AG04449 (cell line): ENCODE measurements at regions of chr20 and their contacts with region 1.

Region 1: GRCh38 chr20:63775096-63775978 is 35.8 kb downstream of the SLC2A4RG start:
- DNase-seq: no peak
- H3K4me3 ChIP-seq: peak overlapping the region; percentile 37
- CTCF ChIP-seq: peak; percentile 91

Region 2: GRCh38 chr20:62776692-62777527 is 998.4 kb before region 1 on chr20:
- CTCF ChIA-PET with region 1: no interaction called
- POLR2A ChIA-PET with region 1: no interaction called
- DNase-seq: no peak
- H3K4me3 ChIP-seq: no peak overlapping the region
- CTCF ChIP-seq: no peak

Region 3: DNA sequence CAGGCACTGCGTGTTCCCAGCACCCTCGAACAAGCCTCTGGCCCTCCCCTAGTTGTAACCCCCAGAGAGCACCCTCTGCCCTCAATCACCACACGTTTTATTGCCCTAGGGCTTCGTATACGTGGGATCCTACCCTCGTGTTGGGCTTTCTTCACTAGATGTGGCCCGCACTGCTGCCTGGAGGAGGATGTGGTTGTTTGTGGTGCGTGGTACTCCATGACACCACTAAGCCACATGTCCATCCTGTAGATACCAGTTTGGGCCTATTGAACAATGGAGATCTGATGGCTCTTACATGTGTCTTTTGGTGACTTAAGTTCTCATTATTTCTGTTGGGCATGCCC is 18.7 kb before region 1 on chr20:
- CTCF ChIA-PET with region 1: interaction called, 13 read pairs
- POLR2A ChIA-PET with region 1: no interaction called
- DNase-seq: no peak
- H3K4me3 ChIP-seq: no peak overlapping the region
- CTCF ChIP-seq: no peak

Region 4: DNA sequence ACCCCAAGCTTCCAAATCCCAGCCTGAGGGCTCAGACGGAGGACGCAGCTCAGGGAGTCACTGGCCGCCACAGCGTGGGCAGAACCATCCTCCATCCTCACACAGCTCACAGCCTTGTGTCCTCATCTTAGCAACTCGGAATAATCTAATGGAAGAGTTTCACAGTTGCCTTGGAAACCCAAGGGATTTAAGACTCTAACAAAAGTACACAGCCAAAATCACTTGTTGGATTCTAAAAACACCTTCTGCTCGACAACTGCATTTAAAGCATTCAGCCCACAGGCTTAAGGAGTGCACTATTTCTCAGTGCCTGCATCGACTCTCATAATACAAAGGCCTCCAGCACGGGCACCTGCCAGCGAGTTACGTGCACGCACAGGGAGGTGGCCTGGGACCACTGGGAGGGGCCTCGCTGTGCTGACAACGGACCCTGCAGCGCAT is 10.4 kb after region 1 on chr20:
- CTCF ChIA-PET with region 1: interaction called, 61 read pairs
- POLR2A ChIA-PET with region 1: no interaction called
- DNase-seq: no peak
- H3K4me3 ChIP-seq: no peak overlapping the region
- CTCF ChIP-seq: peak; percentile 1

Region 5: GRCh38 chr20:63795178-63795830 is 20.0 kb after region 1 on chr20:
- CTCF ChIA-PET with region 1: interaction called, 15 read pairs
- POLR2A ChIA-PET with region 1: no interaction called
- DNase-seq: no peak
- H3K4me3 ChIP-seq: no peak overlapping the region
- CTCF ChIP-seq: no peak

Region 6: GRCh38 chr20:63858393-63859165 is 83.2 kb after region 1 on chr20:
- CTCF ChIA-PET with region 1: interaction called, 16 read pairs
- POLR2A ChIA-PET with region 1: no interaction called
- DNase-seq: no peak
- H3K4me3 ChIP-seq: no peak overlapping the region
- CTCF ChIP-seq: peak; percentile 39

Region 7: DNA sequence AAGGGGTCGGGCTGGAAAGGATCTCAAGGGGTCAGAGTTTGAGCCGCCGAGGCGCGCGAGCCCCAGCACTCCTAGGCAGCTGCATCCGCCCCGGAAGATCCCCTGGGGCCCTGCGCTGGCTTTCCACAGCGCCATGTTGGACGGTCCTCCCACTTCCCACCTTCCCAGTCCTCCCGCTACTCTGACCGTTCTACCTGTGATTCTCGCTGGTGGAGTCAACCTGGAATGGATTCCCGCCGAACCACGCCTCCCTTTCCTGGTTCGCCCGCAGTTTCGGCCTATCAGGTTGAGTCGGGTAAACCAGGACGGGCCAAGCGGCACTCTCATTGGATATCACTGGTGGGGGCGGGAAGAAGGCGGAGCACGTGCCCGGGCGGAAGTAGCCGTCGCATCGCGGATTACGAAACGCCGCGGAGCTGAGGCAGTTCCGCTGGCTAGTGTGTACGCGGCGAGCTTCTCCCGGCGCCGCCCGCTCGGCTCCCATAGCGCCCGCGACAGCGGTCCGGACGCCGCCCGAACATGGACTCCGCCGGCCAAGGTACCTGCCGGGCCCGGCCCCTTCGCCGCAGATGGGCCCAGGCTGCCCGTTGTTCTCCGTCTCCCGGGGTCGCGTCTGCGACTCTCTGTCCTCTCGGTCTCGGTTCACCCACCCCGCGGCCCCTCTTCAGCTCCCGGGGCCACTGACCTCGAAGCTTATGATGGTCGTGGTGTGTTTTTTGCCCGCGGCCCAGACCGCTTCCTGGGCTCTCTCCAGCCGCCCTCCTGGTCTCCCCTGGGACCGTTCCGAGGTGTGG is 89.7 kb after region 1 on chr20 and contains the start of gene TPD52L2:
- CTCF ChIA-PET with region 1: interaction called, 16 read pairs
- POLR2A ChIA-PET with region 1: interaction called, 3 read pairs
- DNase-seq: peak; percentile 77
- H3K4me3 ChIP-seq: peak within 1 kb of the TSS; percentile 96
- CTCF ChIP-seq: no peak

Region 8: GRCh38 chr20:63884506-63885263 is 109.3 kb after region 1 on chr20:
- CTCF ChIA-PET with region 1: no interaction called
- POLR2A ChIA-PET with region 1: no interaction called
- DNase-seq: no peak
- H3K4me3 ChIP-seq: no peak overlapping the region
- CTCF ChIP-seq: no peak

Region 9: DNA sequence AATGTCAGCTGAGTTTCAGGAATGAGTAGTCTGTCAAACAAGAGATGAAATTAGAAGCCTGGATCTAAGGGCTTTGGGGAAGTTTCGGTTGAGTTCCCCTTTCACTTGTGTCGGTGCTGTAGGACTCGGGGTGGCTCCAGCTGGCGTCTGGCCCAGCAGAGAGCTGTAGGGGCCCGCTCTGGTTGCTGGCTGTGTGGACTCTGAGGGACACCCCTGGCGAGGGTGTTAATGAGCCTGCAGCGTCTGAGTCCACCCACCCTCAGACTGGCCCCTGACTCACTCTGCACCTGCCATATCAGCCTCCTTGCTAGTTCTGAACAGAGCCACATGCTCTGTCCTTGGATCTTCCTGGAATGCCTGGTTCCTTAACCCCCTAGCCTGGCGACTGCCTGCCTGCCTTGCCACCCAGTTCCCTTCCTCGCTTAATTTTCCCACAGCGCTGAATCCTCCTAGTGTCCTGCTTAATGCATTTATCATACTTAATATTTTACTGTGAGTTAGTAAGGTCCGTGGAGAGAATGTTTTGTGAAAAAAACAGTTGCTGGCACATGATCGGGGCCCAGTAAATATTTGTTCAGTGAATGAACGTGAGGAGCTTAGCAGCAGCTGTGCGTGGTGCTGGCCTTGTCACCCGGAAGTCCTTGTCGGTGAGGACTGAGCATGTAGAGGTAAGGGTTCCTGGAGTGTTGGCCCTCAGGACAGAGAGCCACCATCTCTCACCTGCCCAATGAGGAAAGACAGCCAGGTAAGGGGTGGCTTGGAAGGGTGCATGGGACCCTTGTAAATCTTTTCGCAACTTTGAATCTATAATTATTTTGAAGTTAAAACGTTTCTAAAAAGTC is 121.1 kb after region 1 on chr20:
- CTCF ChIA-PET with region 1: no interaction called
- POLR2A ChIA-PET with region 1: no interaction called
- DNase-seq: no peak
- H3K4me3 ChIP-seq: peak overlapping the region; percentile 66
- CTCF ChIP-seq: no peak

Region 10: GRCh38 chr20:63973636-63974402 is 198.5 kb after region 1 on chr20:
- CTCF ChIA-PET with region 1: interaction called, 16 read pairs
- POLR2A ChIA-PET with region 1: no interaction called
- DNase-seq: no peak
- H3K4me3 ChIP-seq: peak overlapping the region; percentile 57
- CTCF ChIP-seq: peak; percentile 97